ENCODE measurements at regions of chr5 and their contacts with region 1.

Region 1: DNA sequence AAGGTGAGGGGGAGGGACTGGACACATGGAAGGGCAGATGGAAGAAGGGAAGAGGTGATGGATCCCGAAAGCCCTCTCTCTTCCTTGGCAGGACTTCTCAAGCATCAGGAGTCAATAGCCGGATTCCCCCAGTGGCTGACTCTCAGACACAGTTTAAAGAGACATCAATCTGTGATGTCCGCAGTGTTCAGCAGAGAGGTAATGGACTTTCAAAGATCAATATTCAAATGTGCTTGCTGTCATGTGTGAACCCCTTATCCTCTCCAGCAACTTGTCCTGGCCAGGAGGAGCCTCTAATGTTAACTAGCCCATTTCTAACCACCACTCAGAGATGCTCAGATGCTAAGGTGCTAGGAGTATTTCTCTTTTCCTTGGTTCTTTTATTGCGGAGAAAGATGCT is 392.2 kb downstream of the IRX1 start:
- DNase-seq: no peak
- H3K4me3 ChIP-seq: no peak overlapping the region
- H3K27ac ChIP-seq: no peak overlapping the region
- H3K4me1 ChIP-seq: no peaks in the 10 kb centered on the region
- H3K27me3 ChIP-seq: peaks cover 54% of the 10 kb centered on the region
- CTCF ChIP-seq: no peak

Region 2: GRCh38 chr5:3801967-3802366 is 185.9 kb before region 1 on chr5:
- CTCF ChIA-PET with region 1: no interaction called
- POLR2A ChIA-PET with region 1: no interaction called
- intact Hi-C with region 1: no loop called
- DNase-seq: no peak
- H3K4me3 ChIP-seq: no peak overlapping the region
- H3K27ac ChIP-seq: no peak overlapping the region
- H3K4me1 ChIP-seq: no peaks in the 10 kb centered on the region
- H3K27me3 ChIP-seq: peaks cover 24% of the 10 kb centered on the region
- CTCF ChIP-seq: no peak

Region 3: GRCh38 chr5:4013106-4013898 is 25.4 kb after region 1 on chr5:
- CTCF ChIA-PET with region 1: no interaction called
- POLR2A ChIA-PET with region 1: no interaction called
- intact Hi-C with region 1: loop called (anchors 1 kb)
- DNase-seq: no peak
- H3K4me3 ChIP-seq: no peak overlapping the region
- H3K27ac ChIP-seq: no peak overlapping the region
- H3K4me1 ChIP-seq: no peaks in the 10 kb centered on the region
- H3K27me3 ChIP-seq: peaks cover 71% of the 10 kb centered on the region
- CTCF ChIP-seq: no peak

Measured in PC-9 (cell line).